A673 (cell line): ENCODE measurements at regions of chr1 and their contacts with region 1.

Region 1: GRCh38 chr1:63442141-63442475 is 74.7 kb downstream of the ALG6 start:
- DNase-seq: peak; percentile 42
- H3K4me3 ChIP-seq: no peak overlapping the region
- H3K27ac ChIP-seq: no peak overlapping the region
- H3K4me1 ChIP-seq: peaks cover 22% of the 10 kb centered on the region
- H3K27me3 ChIP-seq: no peaks in the 10 kb centered on the region
- CTCF ChIP-seq: no peak

Region 2: GRCh38 chr1:62926681-62927252 is 515.3 kb before region 1 on chr1:
- CTCF ChIA-PET with region 1: no interaction called
- POLR2A ChIA-PET with region 1: no interaction called
- intact Hi-C with region 1: loop called (anchors 5 kb)
- DNase-seq: peak; percentile 52
- H3K4me3 ChIP-seq: no peak overlapping the region
- H3K27ac ChIP-seq: peak overlapping the region; percentile 91
- H3K4me1 ChIP-seq: peaks cover 43% of the 10 kb centered on the region
- H3K27me3 ChIP-seq: no peaks in the 10 kb centered on the region
- CTCF ChIP-seq: peak; percentile 46

Region 3: GRCh38 chr1:63004868-63005267 is 437.2 kb before region 1 on chr1:
- CTCF ChIA-PET with region 1: no interaction called
- POLR2A ChIA-PET with region 1: no interaction called
- intact Hi-C with region 1: loop called (anchors 10 kb)
- DNase-seq: peak; percentile 30
- H3K4me3 ChIP-seq: no peak overlapping the region
- H3K27ac ChIP-seq: no peak overlapping the region
- H3K4me1 ChIP-seq: no peaks in the 10 kb centered on the region
- H3K27me3 ChIP-seq: no peaks in the 10 kb centered on the region
- CTCF ChIP-seq: peak; percentile 42; the same call in 1 of the 2 replicates

Region 4: GRCh38 chr1:63199696-63200335 is 242.3 kb before region 1 on chr1:
- CTCF ChIA-PET with region 1: no interaction called
- POLR2A ChIA-PET with region 1: no interaction called
- intact Hi-C with region 1: loop called (anchors 10 kb)
- DNase-seq: no peak
- H3K4me3 ChIP-seq: no peak overlapping the region
- H3K27ac ChIP-seq: no peak overlapping the region
- H3K4me1 ChIP-seq: peaks cover 7% of the 10 kb centered on the region
- H3K27me3 ChIP-seq: no peaks in the 10 kb centered on the region
- CTCF ChIP-seq: no peak

Region 5: GRCh38 chr1:63327417-63328139 is 114.5 kb before region 1 on chr1:
- CTCF ChIA-PET with region 1: no interaction called
- POLR2A ChIA-PET with region 1: no interaction called
- intact Hi-C with region 1: loop called (anchors 5 kb)
- DNase-seq: peak; percentile 84
- H3K4me3 ChIP-seq: no peak overlapping the region
- H3K27ac ChIP-seq: no peak overlapping the region
- H3K4me1 ChIP-seq: no peaks in the 10 kb centered on the region
- H3K27me3 ChIP-seq: no peaks in the 10 kb centered on the region
- CTCF ChIP-seq: peak; percentile 92

Region 6: DNA sequence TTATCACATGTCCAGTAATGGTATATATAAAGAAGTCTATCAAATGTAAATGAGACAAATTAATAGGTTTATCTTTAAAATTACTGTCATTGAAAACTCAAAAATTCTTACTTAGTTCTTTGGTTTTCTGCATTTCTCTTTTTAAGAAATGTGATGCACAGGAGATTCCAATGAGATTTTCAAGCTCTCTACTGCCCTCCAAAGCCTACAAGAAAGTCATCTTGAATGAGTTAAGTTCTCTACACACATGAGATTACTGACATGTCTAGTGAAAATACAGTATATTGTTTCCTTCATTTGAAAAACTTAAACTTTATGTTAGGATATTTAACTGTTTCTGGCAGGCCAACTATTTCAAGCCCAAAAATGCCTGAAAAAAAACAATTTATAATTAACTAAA is 12.2 kb after region 1 on chr1:
- CTCF ChIA-PET with region 1: no interaction called
- POLR2A ChIA-PET with region 1: no interaction called
- intact Hi-C with region 1: no loop called
- DNase-seq: peak; percentile 45
- H3K4me3 ChIP-seq: no peak overlapping the region
- H3K27ac ChIP-seq: no peak overlapping the region
- H3K4me1 ChIP-seq: peaks cover 14% of the 10 kb centered on the region
- H3K27me3 ChIP-seq: no peaks in the 10 kb centered on the region
- CTCF ChIP-seq: peak; percentile 53

Region 7: DNA sequence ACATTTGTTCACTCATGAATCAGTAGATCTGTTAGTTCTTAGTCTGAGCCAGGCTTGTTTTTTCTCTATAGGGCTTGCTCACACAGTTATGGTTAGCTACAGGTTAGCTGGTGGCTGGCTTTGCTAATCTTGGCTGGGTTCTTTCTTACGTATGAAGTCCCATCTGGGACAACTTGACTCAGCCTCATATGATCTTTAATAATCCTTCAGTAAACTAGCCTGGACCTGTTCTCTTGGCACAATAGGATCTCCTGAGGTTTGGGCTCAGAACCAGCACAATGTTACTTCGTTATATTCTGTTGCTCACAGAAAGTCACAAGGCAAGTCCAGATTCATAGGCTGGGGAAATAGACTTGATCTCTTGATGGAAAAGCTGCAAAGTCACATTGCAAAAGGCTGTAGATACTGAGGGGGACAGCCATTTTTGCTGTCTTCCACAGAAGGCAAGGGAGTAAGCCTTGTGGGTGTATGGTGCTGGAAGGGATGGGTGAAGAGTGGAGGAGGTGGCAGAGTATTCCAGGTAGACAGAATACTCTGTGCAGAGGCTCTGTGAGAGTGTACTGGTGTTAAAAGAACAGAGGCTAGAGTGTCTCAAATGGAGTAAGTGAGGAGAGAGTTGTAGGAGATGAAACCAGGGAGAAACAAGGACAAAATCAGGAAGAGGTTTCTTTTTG is 105.7 kb after region 1 on chr1:
- CTCF ChIA-PET with region 1: no interaction called
- POLR2A ChIA-PET with region 1: no interaction called
- intact Hi-C with region 1: no loop called
- DNase-seq: no peak
- H3K4me3 ChIP-seq: no peak overlapping the region
- H3K27ac ChIP-seq: no peak overlapping the region
- H3K4me1 ChIP-seq: no peaks in the 10 kb centered on the region
- H3K27me3 ChIP-seq: no peaks in the 10 kb centered on the region
- CTCF ChIP-seq: no peak